Mammary epithelial cell (primary cell): ENCODE measurements at regions of chr3 and their contacts with region 1.

Region 1: DNA sequence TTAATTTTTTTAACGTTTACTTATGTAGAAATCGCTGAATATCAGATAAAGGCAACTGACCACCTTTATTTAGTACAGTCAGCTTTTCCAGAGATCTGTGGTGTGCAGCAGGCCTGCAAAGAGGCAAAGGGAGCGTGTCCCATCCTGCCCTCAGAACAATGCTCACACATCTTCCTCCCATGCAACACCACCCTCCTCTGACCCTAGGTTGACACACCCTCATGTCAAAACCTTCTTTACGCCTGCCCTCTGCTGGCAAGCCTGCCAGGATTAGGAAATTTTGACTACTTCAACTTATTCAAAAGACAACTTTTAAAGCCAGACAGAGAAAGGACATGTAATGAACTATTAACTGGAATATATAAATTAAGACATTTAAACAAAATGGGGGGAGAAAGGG is 513.7 kb downstream of the FOXP1 start:
- DNase-seq: peak; percentile 96
- H3K4me3 ChIP-seq: no peak overlapping the region
- H3K27ac ChIP-seq: peak overlapping the region; percentile 70
- H3K4me1 ChIP-seq: peaks cover 58% of the 10 kb centered on the region
- H3K27me3 ChIP-seq: no peaks in the 10 kb centered on the region
- CTCF ChIP-seq: peak; percentile 73 to 81

Region 2: GRCh38 chr3:70770650-70771049 is 299.1 kb before region 1 on chr3:
- CTCF ChIA-PET with region 1: no interaction called
- dilution Hi-C with region 1: no loop called
- in situ Hi-C with region 1: no loop called
- intact Hi-C with region 1: no loop called
- DNase-seq: no peak
- H3K4me3 ChIP-seq: no peak overlapping the region
- H3K27ac ChIP-seq: no peak overlapping the region
- H3K4me1 ChIP-seq: no peaks in the 10 kb centered on the region
- H3K27me3 ChIP-seq: no peaks in the 10 kb centered on the region
- CTCF ChIP-seq: no peak

Region 3: DNA sequence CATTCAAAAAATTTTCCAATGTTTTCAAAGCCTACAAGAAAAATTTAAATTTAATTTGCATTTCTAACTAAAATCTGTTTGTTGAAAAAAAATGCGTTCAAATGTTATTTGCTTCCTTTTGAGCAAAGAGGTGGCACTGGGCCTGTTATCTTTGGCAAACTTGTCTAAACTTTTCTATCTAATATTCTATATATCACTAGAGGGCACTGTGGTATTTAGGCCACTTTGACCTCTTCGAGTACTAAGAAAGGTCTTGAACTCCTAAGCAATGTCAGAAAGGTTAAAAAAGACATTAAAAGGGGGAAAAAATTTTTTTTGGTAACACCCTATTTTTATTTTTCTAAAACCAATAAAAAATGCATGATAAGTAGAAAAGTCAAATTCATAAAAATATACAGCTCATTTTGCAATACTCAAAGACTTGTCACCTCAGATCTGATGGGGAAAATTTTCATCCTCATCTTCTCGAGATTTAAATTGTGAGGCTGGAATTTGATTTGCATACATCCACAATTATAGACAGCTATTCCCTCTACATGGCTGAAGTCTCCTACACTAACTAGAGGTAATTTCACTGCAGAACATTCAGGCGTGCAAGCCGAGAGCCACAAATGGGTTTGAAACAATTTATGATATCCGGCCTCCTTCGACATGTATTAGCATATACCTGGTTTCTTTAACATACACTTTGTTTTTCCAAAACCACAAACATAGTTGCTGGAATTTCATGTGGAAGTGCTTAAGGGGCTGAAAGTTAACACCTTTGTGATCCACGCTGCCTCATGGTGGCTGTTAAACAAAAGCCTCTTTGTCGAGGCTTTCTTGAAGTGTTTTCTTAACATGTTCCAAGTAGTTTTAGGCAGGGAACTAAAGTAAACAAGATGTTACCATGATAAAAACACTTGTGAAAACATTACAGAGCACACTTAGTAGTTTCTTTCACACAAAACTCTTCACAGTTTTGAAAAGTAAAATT is 62.7 kb before region 1 on chr3:
- CTCF ChIA-PET with region 1: interaction called, 4 read pairs
- dilution Hi-C with region 1: no loop called
- in situ Hi-C with region 1: no loop called
- intact Hi-C with region 1: loop called (anchors 1 kb)
- DNase-seq: peak; percentile 93
- H3K4me3 ChIP-seq: no peak overlapping the region
- H3K27ac ChIP-seq: peak overlapping the region; percentile 91
- H3K4me1 ChIP-seq: peaks cover 33% of the 10 kb centered on the region
- H3K27me3 ChIP-seq: no peaks in the 10 kb centered on the region
- CTCF ChIP-seq: peak; percentile 27 to 56

Region 4: GRCh38 chr3:71111784-71112440 is 42.1 kb after region 1 on chr3:
- CTCF ChIA-PET with region 1: no interaction called
- dilution Hi-C with region 1: no loop called
- in situ Hi-C with region 1: no loop called
- intact Hi-C with region 1: loop called (anchors 2 kb)
- DNase-seq: peak; percentile 89
- H3K4me3 ChIP-seq: no peak overlapping the region
- H3K27ac ChIP-seq: peak overlapping the region; percentile 67
- H3K4me1 ChIP-seq: peaks cover 23% of the 10 kb centered on the region
- H3K27me3 ChIP-seq: no peaks in the 10 kb centered on the region
- CTCF ChIP-seq: no peak

Region 5: DNA sequence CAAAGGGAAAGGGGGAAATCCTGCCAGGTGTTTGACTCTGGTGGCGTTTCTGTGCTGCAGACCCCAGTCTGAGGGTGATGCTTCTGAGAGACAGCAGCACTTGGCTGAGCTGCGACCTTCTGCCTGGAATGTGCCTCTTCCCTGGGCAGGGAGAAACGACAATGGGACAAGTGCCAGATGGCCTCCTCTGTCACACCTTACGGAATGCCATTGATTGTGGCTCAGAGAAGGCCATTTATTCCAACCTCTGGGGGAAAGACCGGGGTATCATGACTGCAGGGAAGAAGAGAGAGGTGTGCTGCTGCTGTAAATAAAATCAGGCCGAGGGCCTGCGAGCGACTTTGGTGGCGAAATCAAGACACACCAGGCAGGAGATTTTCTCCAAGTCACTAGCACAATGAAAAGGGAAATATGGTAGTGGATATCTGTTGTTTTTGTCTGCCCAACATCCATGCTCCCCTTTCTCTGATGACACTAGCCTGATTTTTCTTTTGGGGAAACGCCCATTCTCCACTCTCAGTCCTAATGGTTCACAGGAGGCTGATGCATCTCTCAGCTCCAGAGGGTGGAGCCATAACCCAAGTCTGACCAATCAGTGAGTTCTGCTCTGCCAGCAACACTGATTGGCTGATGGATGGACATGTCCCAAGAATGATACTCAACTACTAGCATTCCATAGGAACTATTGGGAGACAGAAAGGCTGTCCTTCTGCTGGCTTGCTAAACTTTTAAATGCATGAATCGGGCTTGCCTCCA is 177.6 kb after region 1 on chr3:
- CTCF ChIA-PET with region 1: interaction called, 11 read pairs
- dilution Hi-C with region 1: no loop called
- in situ Hi-C with region 1: no loop called
- intact Hi-C with region 1: loop called (anchors 2 kb)
- DNase-seq: peak; percentile 61
- H3K4me3 ChIP-seq: no peak overlapping the region
- H3K27ac ChIP-seq: no peak overlapping the region
- H3K4me1 ChIP-seq: no peaks in the 10 kb centered on the region
- H3K27me3 ChIP-seq: no peaks in the 10 kb centered on the region
- CTCF ChIP-seq: no peak

Region 6: DNA sequence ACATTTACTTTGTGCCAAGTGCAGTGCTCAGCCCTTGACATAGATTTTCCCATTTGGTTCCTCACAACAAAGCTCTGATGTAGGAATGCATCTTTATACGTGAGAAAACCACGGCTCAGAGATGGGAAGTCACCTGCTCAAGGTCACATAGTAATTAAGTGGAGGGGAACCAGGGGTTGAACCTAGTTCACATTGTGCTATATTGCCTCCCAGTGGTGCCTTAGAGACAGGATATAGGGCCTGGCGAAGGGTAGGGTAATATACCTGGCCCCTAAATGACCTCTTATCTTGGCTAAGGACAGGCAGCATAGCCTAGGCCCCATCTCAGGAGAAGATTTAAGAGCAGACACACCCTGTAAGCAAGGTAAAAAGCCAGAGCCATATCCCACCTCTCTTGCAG is 442.2 kb after region 1 on chr3:
- CTCF ChIA-PET with region 1: no interaction called
- dilution Hi-C with region 1: no loop called
- in situ Hi-C with region 1: no loop called
- intact Hi-C with region 1: loop called (anchors 5 kb)
- DNase-seq: no peak
- H3K4me3 ChIP-seq: no peak overlapping the region
- H3K27ac ChIP-seq: no peak overlapping the region
- H3K4me1 ChIP-seq: peaks cover 37% of the 10 kb centered on the region
- H3K27me3 ChIP-seq: no peaks in the 10 kb centered on the region
- CTCF ChIP-seq: peak in 1 of 2 donors; percentile 13